CD4-positive, alpha-beta T cell (primary cell): ENCODE measurements at regions of chr15 and their contacts with region 1.

Region 1: GRCh38 chr15:44606740-44607139 is 56.7 kb downstream of the SPG11 start:
- DNase-seq: no peak
- ATAC-seq: no peak
- H3K4me3 ChIP-seq: no peak overlapping the region
- H3K4me3 Mint-ChIP-seq: no peak overlapping the region
- H3K27ac ChIP-seq: no peak overlapping the region
- H3K27ac Mint-ChIP-seq: no peak overlapping the region
- H3K4me1 ChIP-seq: no peaks in the 10 kb centered on the region
- H3K4me1 Mint-ChIP-seq: no peaks in the 10 kb centered on the region
- H3K27me3 ChIP-seq: no peaks in the 10 kb centered on the region
- H3K27me3 Mint-ChIP-seq: no peaks in the 10 kb centered on the region
- CTCF ChIP-seq: no peak

Region 2: GRCh38 chr15:44654858-44655257 is 48.1 kb after region 1 on chr15:
- CTCF ChIA-PET with region 1: interaction called, 3 read pairs
- POLR2A ChIA-PET with region 1: no interaction called
- intact Hi-C with region 1: loop called in 1 of 2 experiments (anchors 5 kb)
- DNase-seq: no peak
- ATAC-seq: no peak
- H3K4me3 ChIP-seq: no peak overlapping the region
- H3K4me3 Mint-ChIP-seq: no peak overlapping the region
- H3K27ac ChIP-seq: no peak overlapping the region
- H3K27ac Mint-ChIP-seq: no peak overlapping the region
- H3K4me1 ChIP-seq: peaks cover 3% of the 10 kb centered on the region
- H3K4me1 Mint-ChIP-seq: peaks cover 44% of the 10 kb centered on the region
- H3K27me3 ChIP-seq: no peaks in the 10 kb centered on the region
- H3K27me3 Mint-ChIP-seq: no peaks in the 10 kb centered on the region
- CTCF ChIP-seq: no peak